Activated T-helper 1 cell treated with anti-CD3 and anti-CD28 coated beads, Interleukin-12 subunit alpha, Interleukin-12 subunit beta, Interleukin-2, Interleukin-4 antibody, amounts not matched to agents 30 ng/mL and 10 ng/mL and 1 ng/mL, durations not matched to agents 14 hours and 24 hours and 36 hours (primary cell): ENCODE measurements at regions of chr15 and their contacts with region 1.

Region 1: DNA sequence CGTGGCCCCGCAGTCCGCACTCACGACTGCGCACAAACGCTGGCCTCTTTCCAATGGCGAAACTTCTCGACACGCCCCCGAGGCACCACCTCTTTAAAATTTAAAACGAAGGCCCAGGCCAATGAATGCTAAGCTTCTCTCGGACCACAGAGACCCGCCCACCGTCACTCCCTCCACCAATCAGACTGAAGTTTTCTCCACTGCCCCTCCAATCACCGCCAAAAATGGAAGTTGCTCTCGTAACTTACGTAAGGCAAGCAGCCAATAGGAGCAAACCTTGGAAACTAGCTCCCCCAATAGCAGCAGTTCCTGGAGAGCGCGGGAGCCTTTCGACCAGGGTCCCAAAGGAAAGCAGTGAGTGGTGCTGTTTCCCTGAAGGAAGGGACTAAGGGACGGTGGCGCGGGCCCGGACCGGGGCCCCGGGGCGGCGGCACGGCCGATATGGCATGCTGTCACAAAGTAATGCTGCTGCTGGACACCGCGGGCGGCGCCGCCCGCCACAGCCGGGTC is at the start of gene TICRR:
- DNase-seq: peak; percentile 97
- H3K4me3 Mint-ChIP-seq: peak within 1 kb of the TSS; percentile 94
- H3K27ac Mint-ChIP-seq: peak within 1 kb of the TSS; percentile 91
- H3K4me1 Mint-ChIP-seq: peaks cover 30% of the 10 kb centered on the region
- H3K27me3 Mint-ChIP-seq: peaks cover 16% of the 10 kb centered on the region
- total RNA-seq, gene TICRR: 17.6 and 19.2 TPM in 2 replicates

Region 2: GRCh38 chr15:89472785-89473256 is 102.4 kb before region 1 on chr15:
- intact Hi-C with region 1: no loop called
- DNase-seq: peak; percentile 33
- H3K4me3 Mint-ChIP-seq: no peak overlapping the region
- H3K27ac Mint-ChIP-seq: no peak overlapping the region
- H3K4me1 Mint-ChIP-seq: no peaks in the 10 kb centered on the region
- H3K27me3 Mint-ChIP-seq: peaks cover 24% of the 10 kb centered on the region

Region 3: DNA sequence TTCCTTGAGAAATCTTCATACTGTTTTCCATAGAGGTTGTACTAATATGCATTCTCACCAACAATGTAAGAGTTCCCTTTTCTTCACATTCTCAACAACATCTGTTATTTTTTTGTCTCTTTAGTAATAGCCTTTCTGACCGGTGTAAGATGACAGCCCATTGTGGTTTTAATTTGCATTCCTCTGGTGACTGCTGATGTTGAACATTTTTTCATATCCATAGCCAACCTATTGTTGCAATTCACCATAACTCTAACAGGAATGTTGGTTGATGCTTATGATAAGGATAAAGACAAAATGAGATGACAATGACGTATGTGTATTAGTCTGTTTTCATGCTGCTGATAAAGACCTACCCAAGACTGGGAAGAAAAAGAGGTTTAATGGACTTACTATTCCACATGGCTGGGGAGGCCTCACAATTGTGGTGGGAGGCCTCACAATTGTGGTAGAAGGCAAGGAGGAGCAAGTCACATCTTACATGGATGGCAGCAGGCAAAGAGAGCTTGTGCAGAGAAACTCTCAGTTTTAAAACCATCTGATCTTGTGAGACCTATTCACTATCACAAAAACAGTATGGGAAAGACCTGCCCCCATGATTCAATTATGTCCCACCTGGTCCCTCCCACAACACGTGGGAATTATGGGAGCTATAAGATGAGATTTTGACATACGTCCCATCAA is 41.2 kb before region 1 on chr15:
- intact Hi-C with region 1: no loop called
- DNase-seq: no peak
- H3K4me3 Mint-ChIP-seq: no peak overlapping the region
- H3K27ac Mint-ChIP-seq: no peak overlapping the region
- H3K4me1 Mint-ChIP-seq: peaks cover 6% of the 10 kb centered on the region
- H3K27me3 Mint-ChIP-seq: peaks cover 9% of the 10 kb centered on the region

Region 4: GRCh38 chr15:89690276-89691218 is 115.3 kb after region 1 on chr15 and contains the starts of genes PEX11A and WDR93:
- intact Hi-C with region 1: loop called (anchors 5 kb)
- DNase-seq: peak; percentile 64
- H3K4me3 Mint-ChIP-seq: peak within 1 kb of the TSS; percentile 82
- H3K27ac Mint-ChIP-seq: peak within 1 kb of the TSS; percentile 65
- H3K4me1 Mint-ChIP-seq: peaks cover 10% of the 10 kb centered on the region
- H3K27me3 Mint-ChIP-seq: peaks cover 10% of the 10 kb centered on the region
- total RNA-seq, gene PEX11A: 0.66 and 1.0 TPM in 2 replicates
- total RNA-seq, gene WDR93: not detected in 2 replicates

Region 5: GRCh38 chr15:90046911-90047392 is 471.8 kb after region 1 on chr15:
- intact Hi-C with region 1: no loop called
- DNase-seq: no peak
- H3K4me3 Mint-ChIP-seq: no peak overlapping the region
- H3K27ac Mint-ChIP-seq: no peak overlapping the region
- H3K4me1 Mint-ChIP-seq: peaks cover 6% of the 10 kb centered on the region
- H3K27me3 Mint-ChIP-seq: no peaks in the 10 kb centered on the region